A673 (cell line): ENCODE measurements at regions of chr12 and their contacts with region 1.

Region 1: DNA sequence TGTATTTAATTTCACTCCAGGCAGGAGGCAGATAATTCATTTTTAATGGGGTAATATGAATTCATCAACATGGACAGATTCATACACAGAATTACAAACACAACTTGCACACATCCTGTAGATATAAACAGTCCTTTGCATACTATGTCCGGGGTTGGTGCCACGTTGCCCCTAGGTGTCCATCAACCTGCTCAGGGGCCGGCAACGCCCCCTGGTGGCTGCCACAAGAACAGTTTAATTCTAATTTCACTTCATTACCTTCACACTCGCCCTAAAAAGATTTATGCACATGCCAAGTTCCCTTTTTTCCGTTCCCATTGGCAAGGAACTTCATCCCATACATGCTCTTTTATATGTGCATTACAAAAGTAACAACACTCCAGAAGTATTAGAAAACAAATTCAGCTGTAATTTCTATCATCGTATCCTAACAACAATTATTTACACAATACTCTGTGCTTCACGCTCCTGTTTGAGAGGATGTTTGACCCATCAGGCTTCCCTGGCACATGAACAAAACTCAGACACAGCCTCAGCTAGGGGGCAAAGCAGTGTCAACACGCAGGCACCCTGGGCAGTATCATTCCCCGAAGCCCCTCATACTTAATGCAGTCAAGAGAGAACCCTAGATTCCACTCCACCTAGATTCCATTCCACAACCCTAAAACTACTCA is 15.5 kb downstream of the MANSC1 start:
- DNase-seq: peak; percentile 75
- H3K4me3 ChIP-seq: no peak overlapping the region
- H3K27ac ChIP-seq: peak overlapping the region; percentile 65
- H3K4me1 ChIP-seq: peaks cover 24% of the 10 kb centered on the region
- H3K27me3 ChIP-seq: no peaks in the 10 kb centered on the region
- CTCF ChIP-seq: peak; percentile 93

Region 2: DNA sequence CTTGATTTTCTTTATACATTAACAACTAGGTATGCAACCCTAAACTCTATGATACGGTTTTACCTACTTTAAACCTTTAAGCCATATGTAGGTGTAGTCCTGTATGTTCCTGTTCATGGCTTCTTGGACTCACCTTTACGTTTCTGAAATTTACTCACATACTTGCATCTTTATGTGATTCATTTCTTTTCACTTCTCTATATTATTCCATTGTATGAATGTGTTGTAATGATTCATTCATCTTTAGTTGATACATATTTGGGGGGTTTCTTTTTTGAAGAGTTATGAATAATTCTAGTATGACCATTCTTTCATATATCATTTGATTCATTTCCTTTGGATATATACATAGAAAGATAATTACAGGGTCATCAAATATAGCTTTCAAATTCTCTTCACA is 1345.4 kb before region 1 on chr12:
- CTCF ChIA-PET with region 1: no interaction called
- POLR2A ChIA-PET with region 1: no interaction called
- intact Hi-C with region 1: no loop called
- DNase-seq: no peak
- H3K4me3 ChIP-seq: no peak overlapping the region
- H3K27ac ChIP-seq: no peak overlapping the region
- H3K4me1 ChIP-seq: no peaks in the 10 kb centered on the region
- H3K27me3 ChIP-seq: no peaks in the 10 kb centered on the region
- CTCF ChIP-seq: no peak

Region 3: GRCh38 chr12:12249216-12250050 is 85.1 kb before region 1 on chr12:
- CTCF ChIA-PET with region 1: no interaction called
- POLR2A ChIA-PET with region 1: no interaction called
- intact Hi-C with region 1: loop called (anchors 5 kb)
- DNase-seq: peak; percentile 94
- H3K4me3 ChIP-seq: no peak overlapping the region
- H3K27ac ChIP-seq: peak overlapping the region; percentile 99
- H3K4me1 ChIP-seq: peaks cover 68% of the 10 kb centered on the region
- H3K27me3 ChIP-seq: no peaks in the 10 kb centered on the region
- CTCF ChIP-seq: peak; percentile 19; the same call in 1 of the 2 replicates

Region 4: GRCh38 chr12:12305568-12306300 is 28.8 kb before region 1 on chr12:
- CTCF ChIA-PET with region 1: no interaction called
- POLR2A ChIA-PET with region 1: no interaction called
- intact Hi-C with region 1: no loop called
- DNase-seq: no peak
- H3K4me3 ChIP-seq: no peak overlapping the region
- H3K27ac ChIP-seq: no peak overlapping the region
- H3K4me1 ChIP-seq: no peaks in the 10 kb centered on the region
- H3K27me3 ChIP-seq: no peaks in the 10 kb centered on the region
- CTCF ChIP-seq: no peak